ENCODE measurements at regions of chr12 and their contacts with region 1.

Region 1: GRCh38 chr12:106309671-106310505 is 7.4 kb downstream of the TCP11L2 start:
- DNase-seq: no peak
- H3K4me3 ChIP-seq: peak overlapping the region in 2 of 59 donors; percentile 3 to 9
- H3K27ac ChIP-seq: peak overlapping the region in 24 of 59 donors; percentile 1 to 97 (median 34)
- H3K27me3 ChIP-seq: no peaks in the 10 kb centered on the region
- CTCF ChIP-seq: no peak

Region 2: GRCh38 chr12:106345739-106346138 is 35.9 kb after region 1 on chr12:
- intact Hi-C with region 1: loop called in 1 of 2 experiments (anchors 5 kb)
- DNase-seq: peak in 2 of 10 donors; percentile 33 to 50
- H3K4me3 ChIP-seq: no peak overlapping the region
- H3K27ac ChIP-seq: peak overlapping the region in 12 of 59 donors; percentile 1 to 62 (median 24)
- H3K27me3 ChIP-seq: no peaks in the 10 kb centered on the region
- CTCF ChIP-seq: peak in 54 of 56 donors; percentile 22 to 77 (median 53)

Region 3: DNA sequence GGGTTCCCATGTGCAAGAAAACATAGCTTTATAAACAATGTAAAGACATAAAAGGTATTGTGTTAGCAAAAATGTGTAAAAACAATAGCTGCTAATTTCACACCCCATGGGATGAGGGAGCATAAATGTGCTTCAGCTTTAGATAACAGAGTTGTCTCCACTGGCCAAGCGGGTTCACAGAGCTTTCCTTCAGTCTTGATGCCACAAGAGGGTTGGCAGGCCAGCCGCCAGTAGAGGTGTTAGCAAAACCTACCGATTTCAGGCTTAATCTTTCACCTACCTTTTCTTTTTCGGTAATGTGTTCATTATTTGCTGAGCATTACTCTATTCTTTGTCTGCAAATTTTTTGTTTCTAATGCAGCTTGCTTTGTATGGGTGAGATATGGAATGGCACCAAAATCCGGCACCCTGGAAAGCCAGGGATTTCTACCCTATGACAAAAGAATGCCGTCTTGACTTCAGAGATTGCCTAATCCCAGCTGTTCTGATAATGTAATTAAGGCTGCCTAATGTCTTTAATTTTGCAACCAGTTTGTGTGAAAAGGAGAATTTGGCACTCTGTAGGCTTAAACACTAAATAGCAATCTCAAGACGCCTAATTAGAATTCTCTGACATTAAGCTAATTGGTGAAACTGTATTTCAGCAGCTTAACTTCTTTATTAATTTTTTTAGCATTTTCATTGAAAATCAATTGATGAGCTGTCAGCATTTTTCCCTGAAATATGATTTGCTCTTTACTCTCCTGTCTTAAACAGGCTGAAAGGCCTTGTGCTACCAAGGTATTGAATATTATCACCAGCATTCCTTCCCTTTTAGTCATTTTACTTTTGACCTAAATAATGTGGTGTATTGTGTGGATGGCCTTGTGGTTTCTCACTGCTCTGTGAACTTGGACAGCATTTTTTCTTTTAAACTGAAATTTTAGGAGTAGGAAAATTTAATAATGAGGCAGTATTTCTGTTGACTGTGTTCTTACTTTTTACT is 108.3 kb after region 1 on chr12:
- intact Hi-C with region 1: no loop called
- DNase-seq: no peak
- H3K4me3 ChIP-seq: no peak overlapping the region
- H3K27ac ChIP-seq: peak overlapping the region in 1 of 59 donors; percentile 22
- H3K27me3 ChIP-seq: no peaks in the 10 kb centered on the region
- CTCF ChIP-seq: no peak

Measured in dorsolateral prefrontal cortex (tissue), 120 donors.